Head of caudate nucleus (tissue), 42 donors: ENCODE measurements at regions of chr9 and their contacts with region 1.

Region 1: DNA sequence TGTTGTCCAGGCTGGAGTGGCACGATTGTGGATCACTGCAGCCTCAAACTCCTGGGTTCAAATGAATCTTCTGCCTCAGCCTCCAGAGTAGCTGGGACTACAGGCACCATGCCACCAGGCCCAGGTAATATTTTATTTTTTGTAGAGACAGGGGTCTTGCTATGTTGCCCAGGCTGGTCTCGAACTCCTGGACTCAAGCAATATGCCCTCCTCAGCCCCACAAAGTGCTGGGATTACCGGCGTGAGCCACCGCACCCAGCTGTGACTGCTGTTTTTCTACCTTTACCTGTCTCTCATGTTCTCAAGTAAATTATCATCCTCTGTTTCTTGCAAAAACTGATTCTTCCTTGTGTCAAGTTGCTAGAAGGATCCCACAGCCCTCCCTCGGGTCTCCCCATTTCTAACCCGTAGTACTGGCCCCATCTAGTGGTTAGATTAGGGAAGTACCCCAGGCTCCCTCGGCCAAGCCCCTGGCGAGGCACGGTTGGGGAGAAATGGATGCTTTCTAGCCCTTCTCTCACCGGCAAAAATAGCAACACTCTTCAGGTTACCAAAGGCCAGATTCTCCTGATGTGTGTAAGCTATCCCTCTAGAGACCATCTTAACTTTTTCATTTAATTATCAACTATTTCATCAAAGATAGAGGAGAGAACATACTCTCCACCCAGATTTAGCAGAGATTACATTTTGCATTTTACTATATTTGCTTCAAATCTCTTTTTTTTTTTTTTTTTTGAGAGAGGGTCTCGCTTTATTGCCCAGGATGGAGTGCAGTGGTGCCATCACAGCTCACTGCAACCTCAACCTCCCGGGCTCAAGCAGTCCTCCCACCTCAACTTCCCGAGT is 19.2 kb upstream of the TOR1B start:
- DNase-seq: peak; percentile 42 to 91 (median 76)

Region 2: GRCh38 chr9:129139993-129140396 is 643.7 kb before region 1 on chr9:
- intact Hi-C with region 1: loop called (anchors 10 kb)
- DNase-seq: peak; percentile 72 to 97 (median 88)

Region 3: DNA sequence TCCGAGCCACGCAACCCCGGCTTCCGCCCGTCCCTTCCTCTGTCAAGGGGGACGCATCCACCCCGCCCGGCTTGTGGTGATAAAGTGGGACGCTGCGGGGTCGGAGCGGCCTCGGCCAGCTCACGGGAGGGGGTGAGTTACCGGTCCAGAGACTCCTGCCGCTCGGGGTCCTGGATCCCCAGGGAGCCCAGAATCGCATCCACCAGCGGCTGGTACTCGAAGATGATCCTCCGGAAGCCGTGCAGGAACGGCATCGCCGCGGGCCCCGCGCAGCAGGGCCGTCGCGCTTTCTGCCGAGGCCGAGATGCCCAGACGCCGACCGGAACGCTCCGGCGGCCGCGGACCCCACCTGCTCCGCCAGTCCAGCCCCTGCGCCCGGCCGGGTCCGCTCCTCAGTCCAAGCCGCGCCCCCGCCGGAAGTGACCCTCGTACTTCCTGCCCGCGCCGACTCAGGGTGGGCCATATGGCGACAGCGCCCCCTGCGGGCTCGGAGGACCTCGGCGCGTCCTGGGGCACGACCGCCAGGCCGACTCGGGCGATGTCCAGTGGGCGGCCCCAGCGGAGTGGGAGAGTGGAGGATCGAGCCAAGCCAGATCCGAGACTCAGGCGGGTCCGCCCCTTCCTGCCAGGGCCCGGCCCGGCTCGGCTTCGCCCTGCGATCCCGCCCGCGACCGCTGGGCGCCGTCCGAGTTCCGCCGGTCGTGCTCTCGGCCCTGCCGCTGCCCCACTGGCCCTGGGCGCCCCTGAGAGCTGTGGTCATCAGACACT is 141.8 kb before region 1 on chr9 and contains the start of gene ASB6:
- intact Hi-C with region 1: loop called (anchors 10 kb)
- DNase-seq: peak; percentile 83 to 99 (median 96)

Region 4: GRCh38 chr9:129737479-129738274 is 46.1 kb before region 1 on chr9:
- intact Hi-C with region 1: loop called (anchors 5 kb)
- DNase-seq: peak; percentile 62 to 94 (median 84)

Region 5: DNA sequence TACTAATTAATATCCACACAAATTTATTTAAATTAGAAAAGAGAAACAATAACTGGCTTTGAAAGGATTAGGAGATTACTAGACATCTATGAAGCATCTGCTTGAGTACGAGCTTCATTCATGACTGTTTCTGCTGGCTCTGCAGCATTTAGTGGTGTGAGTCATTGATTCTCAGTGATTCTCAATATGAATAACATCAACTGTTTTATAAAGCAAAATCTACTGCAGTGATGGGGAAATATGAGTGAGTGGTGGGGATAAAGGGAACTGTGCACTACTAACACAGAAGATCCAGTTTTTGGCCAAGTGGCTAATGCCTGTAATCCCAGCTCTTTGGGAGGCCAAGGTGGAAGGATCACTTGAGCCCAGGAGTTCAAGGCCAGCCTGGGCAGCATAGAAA is 250.8 kb after region 1 on chr9:
- intact Hi-C with region 1: no loop called
- DNase-seq: peak in 3 of 42 donors; percentile 25 to 54 (median 38)